ENCODE measurements at regions of chr15 and their contacts with region 1.

Region 1: DNA sequence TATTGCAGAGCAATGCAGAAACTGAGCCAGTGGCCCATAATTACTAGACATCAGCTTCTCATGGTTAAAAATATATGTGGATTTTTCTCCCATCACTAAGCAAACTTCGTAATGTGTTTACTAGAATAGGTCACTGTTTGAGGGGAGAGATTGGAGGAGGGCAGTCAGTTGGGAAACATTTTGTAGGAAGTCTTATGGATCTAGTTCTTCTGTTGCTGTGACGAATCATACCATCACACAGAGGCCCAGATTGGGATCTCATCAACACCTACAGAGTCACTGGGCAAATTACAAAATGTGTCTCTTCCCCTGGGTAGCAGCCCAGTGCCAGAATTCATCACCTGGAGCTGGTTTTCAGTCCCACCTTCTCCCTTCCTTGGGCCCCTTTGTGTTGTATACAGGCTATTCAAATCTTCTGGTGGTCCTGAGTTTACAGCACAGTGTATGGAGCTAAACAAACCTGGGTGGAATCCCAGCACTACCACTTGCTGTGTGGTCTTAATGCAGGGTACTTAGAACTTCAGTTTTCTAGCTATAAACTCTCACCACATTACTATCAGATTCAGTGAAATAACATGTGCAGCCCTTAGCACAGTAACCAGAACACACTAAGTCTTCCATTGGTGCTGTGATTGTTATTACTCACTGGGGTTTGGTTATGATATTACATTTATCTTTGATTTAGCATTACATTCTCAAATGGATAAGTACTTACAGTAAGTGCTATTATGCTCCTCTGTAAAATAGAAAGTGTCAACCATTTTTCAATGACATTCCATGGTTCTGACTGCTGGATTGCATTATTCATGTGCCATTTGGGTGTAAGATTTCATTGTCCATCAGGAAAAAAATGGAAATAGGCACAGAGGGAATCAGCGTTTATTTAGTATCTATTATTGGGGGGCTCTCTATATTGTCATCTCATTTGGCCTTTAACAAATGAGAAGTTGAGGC is 81.7 kb downstream of the PDE8A start:
- DNase-seq: no peak
- H3K4me3 ChIP-seq: no peak overlapping the region
- CTCF ChIP-seq: no peak
- POLR2A ChIP-seq: no peak

Region 2: DNA sequence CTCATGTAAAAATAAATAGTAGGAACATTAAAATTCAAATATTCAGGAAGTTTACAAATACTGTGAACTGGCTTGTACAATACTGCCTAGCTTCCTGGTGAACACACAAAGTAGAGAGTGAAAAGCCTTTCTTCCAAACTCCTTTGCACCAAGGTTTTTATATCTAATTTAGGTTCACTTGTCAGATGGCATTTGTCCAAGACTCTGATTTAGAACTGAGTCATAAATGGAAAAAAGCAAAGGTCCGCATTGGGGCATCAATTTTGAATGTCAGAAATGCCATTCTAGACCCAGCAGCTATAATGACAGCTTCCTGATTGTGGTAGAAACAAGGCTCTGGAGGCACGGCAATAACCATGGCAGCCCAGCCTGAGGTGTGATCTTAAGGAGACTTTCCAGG is 78.9 kb after region 1 on chr15:
- intact Hi-C with region 1: no loop called
- DNase-seq: no peak
- H3K4me3 ChIP-seq: no peak overlapping the region
- CTCF ChIP-seq: no peak
- POLR2A ChIP-seq: no peak

Region 3: DNA sequence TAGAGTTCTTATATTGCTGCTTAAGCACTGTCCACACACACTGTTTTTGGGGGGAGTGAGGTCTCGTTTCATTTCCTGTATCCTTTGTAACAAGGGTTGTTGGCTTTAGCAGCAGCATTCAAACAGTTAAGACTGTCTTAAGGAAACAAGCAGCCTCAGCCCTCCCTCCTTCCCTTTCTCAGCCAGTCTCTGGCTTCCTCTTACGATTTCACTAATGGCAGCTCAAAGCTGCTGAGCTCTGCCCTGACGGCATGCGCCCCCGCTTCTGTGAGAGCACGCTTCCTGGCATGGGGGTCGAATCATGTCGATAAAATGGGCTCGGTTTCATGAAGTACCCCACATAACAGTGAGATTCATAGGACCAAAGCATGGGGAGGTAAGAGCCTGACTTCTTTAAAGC is 626.3 kb after region 1 on chr15:
- intact Hi-C with region 1: loop called (anchors 5 kb)
- DNase-seq: no peak
- H3K4me3 ChIP-seq: no peak overlapping the region
- CTCF ChIP-seq: no peak
- POLR2A ChIP-seq: no peak